ENCODE measurements at regions of chrX and their contacts with region 1.

Region 1: GRCh38 chrX:8815464-8816065 is 14.4 kb upstream of the FAM9A start:
- DNase-seq: peak; percentile 45
- ATAC-seq: peak; percentile 53; the same call in 2 of the 3 replicates
- H3K4me3 ChIP-seq: no peak overlapping the region
- H3K27ac ChIP-seq: no peak overlapping the region
- H3K4me1 ChIP-seq: no peaks in the 10 kb centered on the region
- H3K27me3 ChIP-seq: no peaks in the 10 kb centered on the region
- CTCF ChIP-seq: peak; percentile 66
- EP300 ChIP-seq: no peak
- POLR2A ChIP-seq: no peak
- RAD21 ChIP-seq: no peak

Region 2: DNA sequence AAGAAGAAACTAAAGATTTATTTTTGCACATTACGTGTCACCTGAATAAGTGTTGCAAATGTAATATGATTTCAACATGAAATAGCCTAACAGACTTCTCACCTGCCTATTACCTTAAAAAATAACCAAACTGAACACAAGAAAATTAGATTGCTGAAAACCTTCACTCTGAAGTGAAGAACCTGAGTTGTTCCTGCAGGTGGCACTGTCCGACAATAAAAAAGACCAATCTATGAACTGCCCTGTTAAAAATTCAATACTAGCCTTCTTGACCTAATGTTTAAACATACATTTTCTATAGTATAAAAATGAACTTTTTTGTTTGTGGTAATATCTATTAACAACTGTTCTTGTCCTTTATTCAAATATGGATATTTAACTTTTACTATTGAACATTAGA is 819.2 kb before region 1 on chrX:
- CTCF ChIA-PET with region 1: interaction called, 6 read pairs
- POLR2A ChIA-PET with region 1: no interaction called
- in situ Hi-C with region 1: no loop called
- intact Hi-C with region 1: loop called (anchors 2 kb)
- DNase-seq: peak; percentile 28
- ATAC-seq: 0 out of 3 replicates have a peak, but pooled peaks have one; percentile 31
- H3K4me3 ChIP-seq: no peak overlapping the region
- H3K27ac ChIP-seq: no peak overlapping the region
- H3K4me1 ChIP-seq: no peaks in the 10 kb centered on the region
- H3K27me3 ChIP-seq: no peaks in the 10 kb centered on the region
- CTCF ChIP-seq: peak; percentile 55
- EP300 ChIP-seq: no peak
- POLR2A ChIP-seq: no peak
- RAD21 ChIP-seq: no peak

Region 3: DNA sequence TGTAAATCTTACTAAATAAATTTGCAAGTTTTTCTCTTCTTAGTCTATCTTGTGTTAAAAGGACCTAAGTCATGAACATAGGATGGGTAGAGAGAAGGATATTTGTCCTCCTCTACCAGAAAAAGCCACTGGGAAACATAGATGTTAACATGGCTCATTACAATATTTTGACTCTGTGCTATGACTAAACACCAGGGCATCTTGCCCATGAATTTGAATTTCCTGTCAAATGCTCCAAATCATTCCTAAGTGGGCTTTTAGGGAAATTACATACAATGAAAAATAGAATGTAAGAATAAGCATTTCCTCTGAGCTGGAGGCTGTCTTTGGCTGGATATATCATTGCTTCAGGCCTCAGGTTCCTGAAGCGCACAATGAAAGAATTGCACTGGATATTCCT is 122.7 kb before region 1 on chrX:
- CTCF ChIA-PET with region 1: no interaction called
- POLR2A ChIA-PET with region 1: no interaction called
- in situ Hi-C with region 1: no loop called
- intact Hi-C with region 1: no loop called
- DNase-seq: no peak
- ATAC-seq: no peak
- H3K4me3 ChIP-seq: no peak overlapping the region
- H3K27ac ChIP-seq: no peak overlapping the region
- H3K4me1 ChIP-seq: no peaks in the 10 kb centered on the region
- H3K27me3 ChIP-seq: no peaks in the 10 kb centered on the region
- CTCF ChIP-seq: no peak
- EP300 ChIP-seq: no peak
- POLR2A ChIP-seq: no peak
- RAD21 ChIP-seq: no peak

Region 4: DNA sequence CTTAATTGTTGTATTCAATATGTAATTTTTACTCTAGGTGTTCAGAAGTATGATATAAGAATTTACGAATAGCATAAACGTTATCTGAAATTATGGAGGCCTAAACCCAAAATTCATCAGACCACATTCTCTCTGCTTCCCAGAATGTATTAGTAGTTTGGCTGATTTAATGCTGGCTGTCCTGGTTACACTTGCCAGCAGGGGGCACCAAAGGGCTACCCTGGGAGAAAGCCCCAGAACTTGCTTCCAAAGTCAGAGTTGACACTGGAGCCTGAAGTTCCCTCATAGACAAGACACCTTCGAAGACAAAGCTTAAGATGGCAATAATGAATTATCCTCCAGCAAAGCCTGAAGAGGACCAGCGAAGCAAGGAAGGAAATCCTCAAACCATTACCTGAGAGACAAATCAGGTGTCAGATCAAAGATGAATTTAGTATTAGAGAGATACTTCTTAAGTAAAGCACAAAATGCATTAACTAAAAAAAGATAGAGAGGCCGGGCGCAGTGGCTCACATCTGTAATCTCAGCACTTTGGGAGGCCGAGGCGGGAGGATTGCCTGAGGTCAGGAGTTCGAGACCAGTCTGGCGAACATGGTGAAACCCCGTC is 72.3 kb before region 1 on chrX:
- CTCF ChIA-PET with region 1: no interaction called
- POLR2A ChIA-PET with region 1: no interaction called
- in situ Hi-C with region 1: loop called (anchors 10 kb)
- intact Hi-C with region 1: no loop called
- DNase-seq: peak; percentile 17
- ATAC-seq: peak; percentile 50; the same call in 2 of the 3 replicates
- H3K4me3 ChIP-seq: no peak overlapping the region
- H3K27ac ChIP-seq: no peak overlapping the region
- H3K4me1 ChIP-seq: no peaks in the 10 kb centered on the region
- H3K27me3 ChIP-seq: peaks cover 0 to 1% of the 10 kb centered on the region in 2 experiments; a peak in 1 of 5 replicates
- CTCF ChIP-seq: peak; percentile 63
- EP300 ChIP-seq: no peak
- POLR2A ChIP-seq: no peak
- RAD21 ChIP-seq: no peak

Region 5: DNA sequence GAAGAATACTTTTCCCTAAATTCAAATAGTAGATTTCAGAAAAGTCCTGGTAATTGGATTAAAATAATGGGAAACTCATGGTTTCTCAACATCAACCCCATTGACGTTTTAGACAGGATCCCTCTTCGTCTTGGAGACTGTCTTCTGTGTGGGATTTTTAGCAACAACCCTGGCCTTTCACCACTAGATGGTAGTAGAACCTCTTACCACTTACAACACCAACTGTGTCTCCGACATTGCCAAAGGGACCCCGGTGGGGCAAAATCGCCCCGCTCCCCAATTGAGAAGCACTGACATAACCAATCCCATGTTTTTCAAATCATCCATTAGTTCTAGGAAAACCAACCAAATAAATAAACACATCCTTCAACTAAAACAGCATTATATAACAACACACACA is 66.7 kb before region 1 on chrX:
- CTCF ChIA-PET with region 1: interaction called, 3 read pairs
- POLR2A ChIA-PET with region 1: no interaction called
- in situ Hi-C with region 1: loop called (anchors 10 kb)
- intact Hi-C with region 1: loop called (anchors 1 kb)
- DNase-seq: no peak
- ATAC-seq: peak; percentile 61
- H3K4me3 ChIP-seq: no peak overlapping the region
- H3K27ac ChIP-seq: no peak overlapping the region
- H3K4me1 ChIP-seq: no peaks in the 10 kb centered on the region
- H3K27me3 ChIP-seq: no peaks in the 10 kb centered on the region
- CTCF ChIP-seq: peak; percentile 49
- EP300 ChIP-seq: no peak
- POLR2A ChIP-seq: no peak
- RAD21 ChIP-seq: no peak

Region 6: DNA sequence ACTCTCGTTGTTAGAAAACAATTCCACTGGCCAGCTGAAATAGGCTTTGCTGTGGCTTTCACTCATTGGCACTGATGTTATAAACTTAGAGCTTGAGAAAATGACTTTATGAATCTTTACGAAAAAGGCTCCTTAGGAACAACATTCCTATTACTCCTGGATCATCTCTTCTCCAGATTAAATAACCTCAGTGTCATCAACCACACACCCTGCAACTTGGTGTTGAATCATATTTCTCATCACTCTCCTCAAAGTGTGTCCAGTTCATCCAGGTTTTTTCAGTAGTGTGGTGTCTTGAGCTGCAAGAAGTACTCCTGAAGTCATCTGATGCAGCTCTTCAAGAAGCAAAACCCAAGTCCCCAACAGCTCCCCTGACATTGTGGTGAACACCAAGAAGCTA is 55.5 kb before region 1 on chrX:
- CTCF ChIA-PET with region 1: no interaction called
- POLR2A ChIA-PET with region 1: no interaction called
- in situ Hi-C with region 1: no loop called
- intact Hi-C with region 1: no loop called
- DNase-seq: no peak
- ATAC-seq: no peak
- H3K4me3 ChIP-seq: no peak overlapping the region
- H3K27ac ChIP-seq: no peak overlapping the region
- H3K4me1 ChIP-seq: no peaks in the 10 kb centered on the region
- H3K27me3 ChIP-seq: no peaks in the 10 kb centered on the region
- CTCF ChIP-seq: no peak
- EP300 ChIP-seq: no peak
- POLR2A ChIP-seq: no peak
- RAD21 ChIP-seq: no peak

Region 7: GRCh38 chrX:8783100-8784098 is 32.2 kb before region 1 on chrX:
- CTCF ChIA-PET with region 1: no interaction called
- POLR2A ChIA-PET with region 1: no interaction called
- in situ Hi-C with region 1: no loop called
- intact Hi-C with region 1: loop called (anchors 1 kb)
- DNase-seq: peak; percentile 6
- ATAC-seq: peak; percentile 90
- H3K4me3 ChIP-seq: no peak overlapping the region
- H3K27ac ChIP-seq: no peak overlapping the region
- H3K4me1 ChIP-seq: no peaks in the 10 kb centered on the region
- H3K27me3 ChIP-seq: no peaks in the 10 kb centered on the region
- CTCF ChIP-seq: peak; percentile 66
- EP300 ChIP-seq: no peak
- POLR2A ChIP-seq: no peak
- RAD21 ChIP-seq: no peak

Region 8: DNA sequence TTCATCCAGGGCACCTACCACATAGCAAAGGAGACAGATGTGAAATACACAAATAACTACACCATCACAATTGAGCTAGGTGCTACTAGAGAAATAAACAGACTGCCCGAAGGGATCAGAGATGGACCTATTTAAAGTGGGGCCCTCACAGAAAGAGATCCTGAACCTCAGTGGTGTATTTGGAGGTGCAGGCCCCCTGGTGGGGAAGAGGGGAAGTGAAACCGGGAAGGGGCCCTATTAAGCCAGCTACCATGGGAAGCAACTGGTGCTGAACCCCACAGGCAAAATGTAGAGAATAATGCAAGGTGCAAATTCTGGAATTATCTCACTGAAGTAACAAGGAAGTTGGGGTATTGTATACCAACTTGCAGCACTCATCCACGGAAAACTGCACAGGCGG is 64.2 kb after region 1 on chrX:
- CTCF ChIA-PET with region 1: interaction called, 9 read pairs
- POLR2A ChIA-PET with region 1: no interaction called
- in situ Hi-C with region 1: no loop called
- intact Hi-C with region 1: loop called (anchors 2 kb)
- DNase-seq: peak; percentile 1
- ATAC-seq: peak; percentile 73
- H3K4me3 ChIP-seq: no peak overlapping the region
- H3K27ac ChIP-seq: no peak overlapping the region
- H3K4me1 ChIP-seq: no peaks in the 10 kb centered on the region
- H3K27me3 ChIP-seq: no peaks in the 10 kb centered on the region
- CTCF ChIP-seq: peak; percentile 52
- EP300 ChIP-seq: no peak
- POLR2A ChIP-seq: no peak
- RAD21 ChIP-seq: no peak